ENCODE measurements at regions of chr22 and their contacts with region 1.

Region 1: GRCh38 chr22:37643225-37643847 is 3.9 kb downstream of the SH3BP1 start:
- DNase-seq: peak; percentile 79
- H3K4me3 Mint-ChIP-seq: peak overlapping the region; percentile 14
- H3K27ac Mint-ChIP-seq: peak overlapping the region; percentile 2
- H3K4me1 Mint-ChIP-seq: peaks cover 19% of the 10 kb centered on the region
- H3K27me3 Mint-ChIP-seq: no peaks in the 10 kb centered on the region

Region 2: GRCh38 chr22:37571258-37571991 is 71.9 kb before region 1 on chr22:
- intact Hi-C with region 1: no loop called
- DNase-seq: no peak
- H3K4me3 Mint-ChIP-seq: no peak overlapping the region
- H3K27ac Mint-ChIP-seq: no peak overlapping the region
- H3K4me1 Mint-ChIP-seq: peaks cover 12% of the 10 kb centered on the region
- H3K27me3 Mint-ChIP-seq: peaks cover 11% of the 10 kb centered on the region

Region 3: DNA sequence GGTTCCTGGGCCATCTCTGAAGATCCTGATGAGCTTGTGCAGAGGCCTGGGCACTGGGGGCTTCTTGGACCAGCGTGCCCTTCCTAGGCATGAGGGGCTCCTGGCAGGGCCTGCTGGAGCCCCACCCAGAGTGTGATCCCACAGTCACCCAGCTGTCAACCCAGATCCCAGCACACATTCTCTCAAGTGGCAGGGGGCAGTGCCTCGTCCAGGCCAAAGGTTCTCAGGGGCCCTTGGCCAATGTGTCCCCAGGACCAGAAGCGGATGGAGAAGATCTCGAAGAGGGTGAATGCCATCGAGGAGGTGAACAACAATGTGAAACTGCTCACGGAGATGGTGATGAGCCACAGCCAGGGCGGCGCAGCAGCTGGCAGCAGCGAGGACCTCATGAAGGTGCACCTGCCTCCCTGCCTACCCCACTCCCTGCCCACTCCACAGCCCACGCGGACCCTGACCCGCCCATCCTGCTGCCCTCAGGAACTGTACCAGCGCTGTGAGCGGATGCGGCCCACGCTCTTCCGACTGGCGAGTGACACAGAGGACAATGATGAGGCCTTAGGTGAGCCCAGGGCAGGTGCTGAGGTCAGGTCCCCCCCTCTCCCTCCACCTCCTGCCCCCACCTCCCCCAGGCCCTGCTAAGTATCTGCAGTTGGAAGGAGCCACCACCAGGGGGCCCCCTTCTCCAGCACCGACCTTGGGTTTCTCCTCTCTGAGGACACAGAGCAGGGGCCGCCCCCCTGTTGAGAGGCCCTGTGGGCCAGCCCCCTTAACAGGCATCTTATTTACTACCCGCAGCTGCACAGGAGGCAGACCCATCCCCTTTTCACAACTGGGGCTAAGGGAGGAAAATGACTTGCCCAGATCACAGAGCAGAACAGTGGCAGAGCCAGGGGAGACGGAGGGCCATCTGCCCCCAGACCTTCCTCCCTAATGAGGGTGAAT is 20.0 kb before region 1 on chr22:
- intact Hi-C with region 1: loop called (anchors 1 kb)
- DNase-seq: peak; percentile 67
- H3K4me3 Mint-ChIP-seq: no peak overlapping the region
- H3K27ac Mint-ChIP-seq: peak overlapping the region; percentile 70
- H3K4me1 Mint-ChIP-seq: peaks cover 20% of the 10 kb centered on the region
- H3K27me3 Mint-ChIP-seq: no peaks in the 10 kb centered on the region

Region 4: GRCh38 chr22:37658133-37659065 is 15.1 kb after region 1 on chr22 and contains the start of gene PDXP:
- intact Hi-C with region 1: loop called (anchors 2 kb)
- DNase-seq: peak; percentile 98
- H3K4me3 Mint-ChIP-seq: peak within 1 kb of the TSS; percentile 87
- H3K27ac Mint-ChIP-seq: peak within 1 kb of the TSS; percentile 89
- H3K4me1 Mint-ChIP-seq: peaks cover 29% of the 10 kb centered on the region
- H3K27me3 Mint-ChIP-seq: no peaks in the 10 kb centered on the region
- total RNA-seq, gene PDXP: 40.1 and 41.9 TPM in 2 replicates

Region 5: DNA sequence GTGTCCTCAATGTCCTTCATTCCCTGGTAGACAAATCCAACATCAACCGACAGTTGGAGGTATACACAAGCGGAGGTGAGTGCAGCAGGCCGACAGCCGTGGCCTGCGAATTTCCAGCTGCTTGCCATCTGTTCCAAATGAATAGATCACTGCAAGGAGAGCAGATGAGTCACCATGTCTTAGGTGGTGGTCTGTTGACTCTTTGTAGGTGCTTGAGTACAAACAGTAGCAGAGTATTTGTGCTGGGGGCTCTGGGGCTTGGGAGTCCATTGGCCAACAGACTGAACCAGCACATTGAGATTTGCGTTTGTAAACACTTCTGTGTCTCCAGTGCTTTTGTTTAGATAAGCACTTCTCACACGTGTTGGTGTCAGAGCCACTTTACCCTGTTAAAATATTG is 226.9 kb after region 1 on chr22:
- intact Hi-C with region 1: no loop called
- DNase-seq: no peak
- H3K4me3 Mint-ChIP-seq: no peak overlapping the region
- H3K27ac Mint-ChIP-seq: no peak overlapping the region
- H3K4me1 Mint-ChIP-seq: no peaks in the 10 kb centered on the region
- H3K27me3 Mint-ChIP-seq: no peaks in the 10 kb centered on the region

Measured in activated T-helper 2 cell treated with anti-CD3 and anti-CD28 coated beads, Interferon-gamma antibody, Interleukin-2, Interleukin-4, amounts not matched to agents 10 μg/mL and 5 μg/mL and 100 μg/mL, durations not matched to agents 14 hours and 24 hours and 36 hours (primary cell).